ENCODE measurements at regions of chr1 and their contacts with region 1.

Region 1: DNA sequence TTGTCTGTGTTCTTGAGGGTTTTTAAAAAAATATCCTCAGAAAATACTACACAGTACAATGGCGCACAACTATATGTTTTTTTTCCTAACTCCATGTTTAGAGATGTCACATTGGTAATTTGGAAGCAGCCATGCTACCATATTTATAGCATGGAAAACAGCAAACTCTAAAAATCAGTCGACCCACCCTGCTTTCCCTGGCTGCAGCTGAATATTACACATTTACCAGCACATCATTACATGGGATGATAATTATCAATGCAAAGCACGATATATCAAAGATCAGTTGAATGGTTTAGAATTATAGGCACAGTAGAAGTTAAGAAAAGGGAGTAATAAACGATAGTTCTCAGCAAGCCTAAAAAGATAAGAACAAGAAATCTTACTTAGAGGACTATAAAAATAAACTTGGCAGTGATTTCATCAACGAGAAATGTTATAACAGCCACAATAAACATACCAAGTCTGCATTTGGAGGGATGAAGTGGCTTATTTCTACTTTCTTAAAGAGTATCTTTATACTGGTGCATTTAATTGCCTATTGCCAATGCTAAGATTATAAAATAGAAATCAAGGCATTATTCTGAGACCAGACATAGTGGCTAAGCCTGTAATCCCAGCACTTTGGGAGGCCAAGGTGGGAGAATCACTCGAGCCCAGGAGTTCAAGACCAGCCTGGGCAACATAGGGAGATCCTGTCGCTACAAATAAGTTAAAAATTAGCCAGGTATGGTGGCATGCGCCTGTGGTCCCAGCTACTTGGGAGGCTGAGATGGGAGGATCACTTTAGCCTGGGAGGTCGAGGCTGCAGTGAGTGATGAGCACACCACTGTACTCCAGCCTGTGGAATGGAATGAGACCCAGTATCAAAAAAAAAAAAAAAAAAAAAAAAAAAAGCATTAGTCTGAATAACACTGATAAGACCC is 43.4 kb downstream of the WDR64 start:
- DNase-seq: no peak
- ATAC-seq: no peak
- H3K4me3 ChIP-seq: no peak overlapping the region
- H3K27ac ChIP-seq: peak overlapping the region; percentile 94
- H3K4me1 ChIP-seq: peaks cover 15 to 47% of the 10 kb centered on the region in 2 experiments
- H3K27me3 ChIP-seq: no peaks in the 10 kb centered on the region
- CTCF ChIP-seq: no peak
- EP300 ChIP-seq: no peak; the same call in 1 of the 2 replicates
- POLR2A ChIP-seq: no peak
- RAD21 ChIP-seq: no peak

Region 2: DNA sequence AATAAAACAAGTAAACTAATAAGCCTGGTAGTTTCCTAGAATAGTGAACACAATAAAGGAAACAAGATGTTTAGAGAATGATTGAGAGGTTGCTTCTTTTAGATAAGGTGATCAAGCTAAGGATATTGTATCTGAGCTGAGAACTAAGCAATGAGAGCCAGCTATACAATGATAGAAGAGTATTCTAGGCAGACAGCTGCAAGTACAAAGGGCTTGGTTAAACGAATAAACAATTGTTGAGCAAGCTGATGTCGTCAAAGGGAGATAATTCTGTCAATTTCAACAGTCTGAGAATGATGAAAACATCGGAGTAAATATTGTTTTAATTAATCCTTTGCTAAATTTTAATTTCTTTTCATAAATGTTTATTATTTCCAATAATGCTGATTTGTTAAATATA is 170.5 kb before region 1 on chr1:
- CTCF ChIA-PET with region 1: no interaction called
- POLR2A ChIA-PET with region 1: no interaction called
- in situ Hi-C with region 1: no loop called
- intact Hi-C with region 1: loop called (anchors 5 kb)
- DNase-seq: no peak
- ATAC-seq: no peak
- H3K4me3 ChIP-seq: no peak overlapping the region
- H3K27ac ChIP-seq: no peak overlapping the region
- H3K4me1 ChIP-seq: peaks cover 0 to 2% of the 10 kb centered on the region in 2 experiments; a peak in 2 of 5 replicates
- H3K27me3 ChIP-seq: no peaks in the 10 kb centered on the region
- CTCF ChIP-seq: no peak
- EP300 ChIP-seq: no peak
- POLR2A ChIP-seq: no peak
- RAD21 ChIP-seq: no peak

Region 3: DNA sequence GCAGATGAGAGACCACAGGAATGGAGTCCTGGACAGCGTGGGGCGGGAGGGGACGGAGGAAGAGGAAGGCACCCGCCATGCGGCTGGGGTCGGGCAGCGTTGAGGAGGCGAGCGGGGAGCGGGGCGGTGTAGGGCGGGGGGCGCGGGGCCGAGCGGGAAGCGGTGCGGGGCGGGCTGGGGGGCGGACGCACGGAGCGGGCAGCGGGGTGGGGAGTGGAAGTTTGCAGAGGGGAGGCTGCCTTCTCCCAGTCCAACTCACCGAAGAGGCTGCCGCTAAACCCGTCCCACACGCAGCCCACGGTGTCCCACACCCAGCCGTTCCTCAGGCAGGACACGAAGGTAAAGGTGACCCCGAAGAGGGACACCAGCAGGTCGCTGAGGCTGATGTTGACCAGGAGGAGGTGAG is 55.9 kb before region 1 on chr1:
- CTCF ChIA-PET with region 1: no interaction called
- POLR2A ChIA-PET with region 1: interaction called, 3 read pairs
- in situ Hi-C with region 1: no loop called
- intact Hi-C with region 1: loop called (anchors 1 kb)
- DNase-seq: peak; percentile 66 to 74 (median 68)
- ATAC-seq: peak; percentile 60
- H3K4me3 ChIP-seq: peak overlapping the region; percentile 88
- H3K27ac ChIP-seq: peak overlapping the region; percentile 93
- H3K4me1 ChIP-seq: peaks cover 7 to 9% of the 10 kb centered on the region in 2 experiments
- H3K27me3 ChIP-seq: no peaks in the 10 kb centered on the region
- CTCF ChIP-seq: 0 out of 6 replicates have a peak, but pooled peaks of 1 of the 3 experiments have one; percentile 23
- EP300 ChIP-seq: no peak
- POLR2A ChIP-seq: no peak; the same call in none of the 2 replicates
- RAD21 ChIP-seq: no peak

Region 4: GRCh38 chr1:241770115-241770514 is 74.6 kb after region 1 on chr1:
- CTCF ChIA-PET with region 1: no interaction called
- POLR2A ChIA-PET with region 1: no interaction called
- in situ Hi-C with region 1: no loop called
- intact Hi-C with region 1: loop called (anchors 2 kb)
- DNase-seq: peak in 2 of 4 experiments; percentile 61 to 71
- ATAC-seq: peak; percentile 95
- H3K4me3 ChIP-seq: no peak overlapping the region
- H3K27ac ChIP-seq: peak overlapping the region; percentile 22; the same call in 1 of the 3 replicates
- H3K4me1 ChIP-seq: peaks cover 4 to 19% of the 10 kb centered on the region in 2 experiments; a peak in 4 of 5 replicates
- H3K27me3 ChIP-seq: no peaks in the 10 kb centered on the region
- CTCF ChIP-seq: no peak
- EP300 ChIP-seq: no peak
- POLR2A ChIP-seq: no peak
- RAD21 ChIP-seq: no peak

Region 5: DNA sequence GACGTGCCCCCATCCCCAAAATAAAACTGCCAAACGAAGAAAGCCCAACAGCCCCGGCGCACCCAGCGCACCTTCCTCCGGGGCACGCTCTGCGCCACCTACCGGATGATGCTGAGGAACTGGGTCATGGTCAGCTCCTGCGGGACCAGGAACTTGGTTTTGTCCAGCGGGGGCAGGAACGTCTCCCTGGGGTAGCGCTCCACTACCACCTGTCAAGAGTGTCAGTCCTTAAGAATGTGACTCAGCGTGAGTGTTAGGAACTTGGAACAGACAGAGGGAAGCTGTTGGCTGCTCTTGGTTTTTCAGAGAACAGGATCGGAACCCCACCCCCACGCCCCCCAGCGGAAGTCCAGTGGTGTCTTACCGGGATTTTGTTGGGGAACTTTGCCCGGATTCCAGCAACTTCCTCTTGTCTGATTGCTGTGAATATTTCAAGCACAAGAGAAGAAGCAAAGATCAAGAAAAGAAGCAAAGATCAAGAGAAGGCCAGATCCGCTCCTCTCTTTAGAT is 303.0 kb after region 1 on chr1:
- CTCF ChIA-PET with region 1: no interaction called
- POLR2A ChIA-PET with region 1: no interaction called
- in situ Hi-C with region 1: no loop called
- intact Hi-C with region 1: no loop called
- DNase-seq: peak; percentile 81 to 85 (median 83)
- ATAC-seq: peak; percentile 97
- H3K4me3 ChIP-seq: peak overlapping the region; percentile 48
- H3K27ac ChIP-seq: no peak overlapping the region; the same call in 2 of the 3 replicates
- H3K4me1 ChIP-seq: peaks cover 0 to 4% of the 10 kb centered on the region in 2 experiments; a peak in 1 of 5 replicates
- H3K27me3 ChIP-seq: peaks cover 27 to 50% of the 10 kb centered on the region in 2 experiments
- CTCF ChIP-seq: peak; percentile 83 to 100 (median 95)
- EP300 ChIP-seq: no peak
- POLR2A ChIP-seq: no peak
- RAD21 ChIP-seq: peak; percentile 60 to 66

Region 6: DNA sequence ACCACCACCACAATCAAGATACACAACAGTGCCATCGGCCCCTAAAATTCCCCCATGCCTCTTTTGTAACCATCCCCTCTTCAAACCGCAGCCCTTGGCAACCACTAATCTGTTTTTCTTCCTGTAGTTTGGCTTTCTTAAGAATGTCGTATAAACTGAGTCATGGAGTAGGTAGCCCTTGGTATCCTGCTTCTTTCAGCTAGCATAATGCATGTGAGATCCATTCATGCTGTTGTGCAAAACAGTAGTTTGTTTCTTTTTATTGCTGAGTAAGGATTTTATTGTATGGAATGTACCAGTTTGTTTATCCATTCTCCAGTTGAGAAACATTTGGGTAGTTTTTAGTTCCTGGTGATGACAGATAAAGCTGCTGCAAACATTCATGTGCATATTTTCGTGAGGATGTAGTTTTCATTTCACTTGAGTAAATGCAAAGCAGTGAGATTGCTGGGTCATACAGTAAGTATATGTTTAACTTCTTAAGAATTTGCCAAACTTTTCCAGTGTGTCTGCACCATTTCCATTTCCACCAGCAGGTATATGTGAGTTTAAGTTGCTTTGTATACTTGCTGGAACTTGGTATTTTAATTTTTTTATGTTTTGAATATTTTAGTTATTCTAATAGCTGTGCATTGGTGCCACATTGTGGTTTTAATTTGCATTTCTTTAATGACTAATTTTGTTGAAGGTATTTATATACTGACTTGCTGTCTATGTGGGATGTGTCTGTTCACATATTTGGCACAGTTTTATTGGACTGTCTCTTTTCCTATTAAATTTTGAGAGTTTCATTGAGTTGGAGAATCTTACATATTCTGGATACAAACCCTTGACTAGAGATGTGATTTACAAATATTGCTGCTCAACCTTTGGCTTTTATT is 451.8 kb after region 1 on chr1:
- CTCF ChIA-PET with region 1: no interaction called
- POLR2A ChIA-PET with region 1: no interaction called
- in situ Hi-C with region 1: no loop called
- intact Hi-C with region 1: no loop called
- DNase-seq: no peak
- ATAC-seq: no peak
- H3K4me3 ChIP-seq: no peak overlapping the region
- H3K27ac ChIP-seq: no peak overlapping the region
- H3K4me1 ChIP-seq: no peaks in the 10 kb centered on the region
- H3K27me3 ChIP-seq: no peaks in the 10 kb centered on the region
- CTCF ChIP-seq: no peak
- EP300 ChIP-seq: no peak
- POLR2A ChIP-seq: no peak
- RAD21 ChIP-seq: no peak

Measured in K562 (cell line).